ENCODE measurements at regions of chr4 and their contacts with region 1.

Region 1: GRCh38 chr4:43709443-43709842 is 739.2 kb downstream of the KCTD8 start:
- DNase-seq: no peak
- ATAC-seq: no peak
- H3K4me3 ChIP-seq: no peak overlapping the region
- H3K4me3 Mint-ChIP-seq: no peak overlapping the region
- H3K27ac ChIP-seq: no peak overlapping the region
- H3K27ac Mint-ChIP-seq: no peak overlapping the region
- H3K4me1 ChIP-seq: no peaks in the 10 kb centered on the region
- H3K4me1 Mint-ChIP-seq: no peaks in the 10 kb centered on the region
- H3K27me3 ChIP-seq: no peaks in the 10 kb centered on the region
- H3K27me3 Mint-ChIP-seq: no peaks in the 10 kb centered on the region
- CTCF ChIP-seq: no peak

Region 2: GRCh38 chr4:43754566-43754965 is 45.1 kb after region 1 on chr4:
- CTCF ChIA-PET with region 1: no interaction called
- POLR2A ChIA-PET with region 1: no interaction called
- intact Hi-C with region 1: loop called in 1 of 2 experiments (anchors 5 kb)
- DNase-seq: no peak
- ATAC-seq: no peak
- H3K4me3 ChIP-seq: no peak overlapping the region
- H3K4me3 Mint-ChIP-seq: no peak overlapping the region
- H3K27ac ChIP-seq: no peak overlapping the region
- H3K27ac Mint-ChIP-seq: no peak overlapping the region
- H3K4me1 ChIP-seq: no peaks in the 10 kb centered on the region
- H3K4me1 Mint-ChIP-seq: no peaks in the 10 kb centered on the region
- H3K27me3 ChIP-seq: no peaks in the 10 kb centered on the region
- H3K27me3 Mint-ChIP-seq: no peaks in the 10 kb centered on the region
- CTCF ChIP-seq: no peak

Measured in CD4-positive, alpha-beta T cell (primary cell).